PC-3 (cell line): ENCODE measurements at regions of chr1 and their contacts with region 1.

Region 1: GRCh38 chr1:199422198-199422597 is 605.3 kb upstream of the NR5A2 start:
- DNase-seq: peak; percentile 53
- ATAC-seq: peak; percentile 80
- H3K4me3 ChIP-seq: no peak overlapping the region
- H3K27ac ChIP-seq: no peak overlapping the region
- H3K4me1 ChIP-seq: no peaks in the 10 kb centered on the region
- H3K27me3 ChIP-seq: no peaks in the 10 kb centered on the region
- CTCF ChIP-seq: peak; percentile 55

Region 2: DNA sequence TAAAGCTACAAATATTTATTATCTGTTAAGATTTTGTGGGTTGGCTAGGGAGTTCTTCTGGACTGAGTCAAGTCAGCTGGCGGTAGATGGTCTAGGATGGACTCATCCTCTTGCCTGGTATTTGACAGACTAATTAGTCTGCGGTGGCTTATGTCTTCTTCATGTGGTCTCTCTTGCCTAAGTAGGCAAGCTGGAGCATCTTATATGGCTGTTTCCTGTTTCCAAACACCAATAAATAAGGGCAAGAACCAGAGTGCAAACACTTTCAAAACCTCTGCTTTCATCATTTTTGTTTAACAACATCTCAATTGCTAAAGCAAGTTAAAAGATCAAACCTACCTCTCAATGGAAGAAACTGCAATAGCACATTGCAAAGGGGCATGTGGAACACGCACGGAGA is 298.6 kb before region 1 on chr1:
- CTCF ChIA-PET with region 1: no interaction called
- POLR2A ChIA-PET with region 1: no interaction called
- intact Hi-C with region 1: loop called (anchors 5 kb)
- DNase-seq: peak; percentile 3
- ATAC-seq: no peak
- H3K4me3 ChIP-seq: no peak overlapping the region
- H3K27ac ChIP-seq: peak overlapping the region; percentile 86
- H3K4me1 ChIP-seq: peaks cover 27% of the 10 kb centered on the region
- H3K27me3 ChIP-seq: no peaks in the 10 kb centered on the region
- CTCF ChIP-seq: no peak

Region 3: GRCh38 chr1:200107004-200107470 is 684.8 kb after region 1 on chr1:
- CTCF ChIA-PET with region 1: no interaction called
- POLR2A ChIA-PET with region 1: no interaction called
- intact Hi-C with region 1: no loop called
- DNase-seq: peak; percentile 58
- ATAC-seq: peak; percentile 93
- H3K4me3 ChIP-seq: peak overlapping the region; percentile 40
- H3K27ac ChIP-seq: no peak overlapping the region
- H3K4me1 ChIP-seq: peaks cover 12% of the 10 kb centered on the region
- H3K27me3 ChIP-seq: no peaks in the 10 kb centered on the region
- CTCF ChIP-seq: no peak